Endothelial cell of umbilical vein (primary cell): ENCODE measurements at regions of chr3 and their contacts with region 1.

Region 1: GRCh38 chr3:14203521-14204079 is 25.0 kb downstream of the LSM3 start:
- DNase-seq: peak; percentile 72
- H3K4me3 ChIP-seq: no peak overlapping the region
- H3K27ac ChIP-seq: no peak overlapping the region
- H3K4me1 ChIP-seq: peaks cover 2% of the 10 kb centered on the region
- H3K27me3 ChIP-seq: no peaks in the 10 kb centered on the region
- CTCF ChIP-seq: peak; percentile 80 to 81
- POLR2A ChIP-seq: no peak

Region 2: DNA sequence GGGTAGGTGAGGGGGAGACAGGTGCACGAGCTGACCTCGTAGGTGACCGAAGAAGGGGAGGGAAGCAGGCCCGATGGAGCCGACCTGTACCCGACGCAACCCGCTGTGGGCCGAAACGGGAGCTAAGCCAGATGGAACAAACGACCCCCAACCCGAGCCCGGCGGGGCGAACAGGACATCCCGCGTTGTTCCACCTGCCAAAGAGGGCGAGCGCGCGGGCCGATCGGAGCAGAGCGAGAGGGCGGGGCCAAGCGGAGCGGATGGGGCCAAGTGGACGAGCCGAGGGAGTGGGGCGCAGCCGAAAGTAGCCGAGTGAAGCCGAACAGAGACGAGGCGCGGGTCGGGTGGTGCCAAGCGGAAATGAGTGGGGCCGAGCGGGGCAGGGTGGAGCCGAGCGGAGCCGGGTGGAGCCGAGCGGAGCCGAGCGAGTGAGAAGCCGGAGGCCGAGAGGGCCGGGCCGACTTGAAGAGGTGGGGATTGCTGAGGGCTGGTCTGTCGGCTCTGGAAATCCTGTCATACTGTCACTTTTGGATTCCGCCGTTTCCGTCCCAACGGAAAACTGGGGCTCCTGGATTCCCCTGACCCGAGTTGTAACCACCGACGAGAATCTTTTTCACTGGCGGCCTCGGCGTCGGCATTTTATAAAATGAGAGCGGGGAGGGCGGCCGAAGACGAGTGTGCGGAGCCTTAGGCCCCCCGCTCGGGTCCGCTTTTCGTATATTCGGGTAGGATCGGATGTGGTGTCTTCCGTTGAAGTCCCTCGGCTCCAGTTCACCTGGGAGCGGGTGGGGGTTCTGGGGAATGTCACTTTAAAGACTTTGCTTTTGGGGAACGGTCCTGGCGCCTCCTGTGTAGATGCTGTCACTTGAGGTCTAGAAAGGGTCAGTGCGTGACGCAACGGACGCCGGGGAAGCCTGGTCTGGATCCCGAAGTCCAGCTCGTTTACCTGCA is 308.2 kb before region 1 on chr3:
- CTCF ChIA-PET with region 1: interaction called, 46 read pairs
- POLR2A ChIA-PET with region 1: no interaction called
- dilution Hi-C with region 1: no loop called
- intact Hi-C with region 1: no loop called
- DNase-seq: peak; percentile 91
- H3K4me3 ChIP-seq: peak overlapping the region; percentile 22 to 54 (median 33)
- H3K27ac ChIP-seq: no peak overlapping the region
- H3K4me1 ChIP-seq: peaks cover 8% of the 10 kb centered on the region
- H3K27me3 ChIP-seq: no peaks in the 10 kb centered on the region
- CTCF ChIP-seq: no peak
- POLR2A ChIP-seq: no peak

Region 3: DNA sequence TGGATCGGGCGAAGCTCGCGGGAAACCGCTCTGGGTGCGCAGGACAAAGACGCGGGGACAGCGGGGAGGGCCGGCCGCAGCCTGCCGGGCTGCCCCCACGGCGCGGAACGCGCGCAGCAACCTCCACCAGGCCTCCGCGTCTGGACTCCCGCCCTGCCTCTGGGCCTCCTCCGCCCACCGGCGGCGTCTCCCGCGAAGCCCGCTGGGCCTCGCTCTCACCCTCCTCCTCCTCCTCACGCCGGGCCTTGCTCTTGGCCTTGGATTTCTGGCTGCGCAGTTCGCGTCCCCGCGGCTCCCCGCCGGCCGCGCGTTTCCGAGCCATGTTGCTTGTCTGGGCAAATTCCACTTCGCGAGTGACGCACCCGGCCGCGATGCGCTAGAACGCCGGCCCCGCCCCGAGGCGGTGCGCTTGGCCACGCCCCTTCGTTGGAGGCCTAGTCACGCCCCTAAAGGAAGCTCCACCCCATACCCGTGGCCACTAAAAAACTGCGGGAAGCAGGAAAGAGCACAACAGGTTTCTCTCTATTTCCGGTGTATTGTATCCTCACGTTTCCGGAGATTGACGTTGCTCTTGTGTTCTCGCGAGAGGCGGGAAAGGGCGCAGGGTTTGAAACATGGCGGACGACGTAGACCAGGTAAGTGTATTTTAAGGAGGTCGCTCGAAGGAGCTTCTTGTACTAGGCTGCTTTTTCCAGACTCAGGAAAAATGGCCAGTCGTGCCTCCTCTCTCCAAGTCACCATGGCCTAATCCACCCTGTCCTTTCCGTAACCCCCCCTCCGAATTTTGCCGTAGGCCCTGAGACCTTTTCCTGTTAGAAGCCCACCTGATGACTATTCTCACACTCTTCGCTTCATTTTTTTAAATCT is 25.1 kb before region 1 on chr3 and contains the starts of genes LSM3 and XPC:
- CTCF ChIA-PET with region 1: interaction called, 19 read pairs
- POLR2A ChIA-PET with region 1: interaction called, 9 read pairs
- dilution Hi-C with region 1: no loop called
- intact Hi-C with region 1: no loop called
- DNase-seq: peak; percentile 98
- H3K4me3 ChIP-seq: peak within 1 kb of the TSS; percentile 57 to 90 (median 81)
- H3K27ac ChIP-seq: peak within 1 kb of the TSS; percentile 70
- H3K4me1 ChIP-seq: peaks cover 10% of the 10 kb centered on the region
- H3K27me3 ChIP-seq: no peaks in the 10 kb centered on the region
- CTCF ChIP-seq: no peak
- POLR2A ChIP-seq: peak; percentile 95
- total RNA-seq, gene LSM3: 13.0 and 13.6 TPM in 2 replicates
- total RNA-seq, gene XPC: 36.7 and 36.8 TPM in 2 replicates

Region 4: DNA sequence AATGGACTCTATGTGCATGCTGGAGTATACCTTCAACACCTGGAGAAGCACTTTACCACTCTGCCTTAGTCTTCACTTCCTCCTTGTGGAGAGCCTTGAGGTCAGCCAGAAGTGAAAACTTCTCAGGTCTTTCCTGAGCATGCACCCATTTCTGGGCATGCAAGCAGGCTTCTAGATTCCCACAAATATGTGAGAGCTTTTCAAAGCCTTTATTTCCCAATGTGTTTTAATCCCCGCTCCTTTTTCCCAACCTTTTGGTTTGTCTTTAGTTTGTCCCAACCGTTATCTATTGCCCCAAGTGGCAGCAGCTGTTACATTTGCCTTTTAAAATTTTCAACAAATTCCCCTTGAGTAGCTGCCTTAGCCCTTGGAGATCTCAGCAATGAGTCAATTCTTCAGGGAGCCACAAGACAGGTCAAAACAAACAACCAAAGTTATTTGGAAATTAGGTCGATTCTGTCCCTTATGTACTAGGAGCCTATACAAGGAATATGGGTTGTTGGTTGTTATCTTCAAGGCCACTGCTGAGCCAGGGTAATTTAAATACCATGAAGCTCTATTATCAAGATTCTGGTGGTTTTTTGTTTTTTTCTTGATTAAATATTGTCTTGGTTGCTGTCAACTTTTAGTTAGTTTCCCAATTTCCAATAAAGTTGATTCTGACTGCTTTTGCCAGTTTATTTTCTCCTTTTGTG is 19.4 kb after region 1 on chr3:
- CTCF ChIA-PET with region 1: interaction called, 17 read pairs
- POLR2A ChIA-PET with region 1: interaction called, 3 read pairs
- dilution Hi-C with region 1: no loop called
- intact Hi-C with region 1: no loop called
- DNase-seq: no peak
- H3K4me3 ChIP-seq: no peak overlapping the region
- H3K27ac ChIP-seq: no peak overlapping the region
- H3K4me1 ChIP-seq: peaks cover 12% of the 10 kb centered on the region
- H3K27me3 ChIP-seq: peaks cover 0 to 2% of the 10 kb centered on the region in 2 experiments
- CTCF ChIP-seq: no peak
- POLR2A ChIP-seq: no peak

Region 5: GRCh38 chr3:14261229-14261628 is 57.6 kb after region 1 on chr3:
- CTCF ChIA-PET with region 1: interaction called, 22 read pairs
- POLR2A ChIA-PET with region 1: no interaction called
- dilution Hi-C with region 1: no loop called
- intact Hi-C with region 1: loop called (anchors 1 kb)
- DNase-seq: peak; percentile 81
- H3K4me3 ChIP-seq: no peak overlapping the region
- H3K27ac ChIP-seq: no peak overlapping the region
- H3K4me1 ChIP-seq: no peaks in the 10 kb centered on the region
- H3K27me3 ChIP-seq: peaks cover 6 to 9% of the 10 kb centered on the region in 2 experiments
- CTCF ChIP-seq: peak; percentile 90 to 91
- POLR2A ChIP-seq: no peak

Region 6: DNA sequence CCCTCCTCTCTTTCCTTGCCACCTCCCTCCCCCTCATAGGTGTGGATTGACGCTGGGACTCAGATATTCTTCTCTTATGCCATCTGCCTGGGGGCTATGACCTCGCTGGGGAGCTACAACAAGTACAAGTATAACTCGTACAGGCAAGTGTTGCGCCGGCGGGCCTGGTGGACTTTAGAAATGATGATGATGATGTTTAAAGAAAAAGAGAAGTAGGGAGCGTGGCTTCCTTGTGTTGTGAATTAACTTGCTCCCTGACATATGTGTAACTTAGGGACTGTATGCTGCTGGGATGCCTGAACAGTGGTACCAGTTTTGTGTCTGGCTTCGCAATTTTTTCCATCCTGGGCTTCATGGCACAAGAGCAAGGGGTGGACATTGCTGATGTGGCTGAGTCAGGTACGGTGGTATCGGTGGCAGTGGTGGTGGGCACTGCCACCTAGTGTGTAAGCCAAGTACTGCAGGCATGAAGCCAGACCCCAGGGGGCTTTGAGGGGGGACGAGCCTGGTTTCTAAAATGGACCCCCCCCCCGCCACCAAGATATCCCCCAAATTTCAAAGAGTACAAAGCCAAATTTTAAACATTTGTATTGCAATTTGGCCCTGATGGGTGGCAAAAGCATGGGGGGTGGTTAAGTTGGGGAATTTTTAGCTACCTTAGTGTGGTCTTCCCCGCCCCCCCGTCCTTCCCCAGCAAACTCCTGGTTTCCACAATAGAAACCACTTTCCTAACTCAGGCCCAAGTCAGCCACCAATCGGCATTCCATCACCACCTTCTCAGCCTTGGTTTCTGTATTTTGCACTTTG is 264.4 kb after region 1 on chr3:
- CTCF ChIA-PET with region 1: interaction called, 93 read pairs
- POLR2A ChIA-PET with region 1: no interaction called
- dilution Hi-C with region 1: no loop called
- intact Hi-C with region 1: loop called (anchors 1 kb)
- DNase-seq: peak; percentile 41
- H3K4me3 ChIP-seq: no peak overlapping the region
- H3K27ac ChIP-seq: no peak overlapping the region
- H3K4me1 ChIP-seq: peaks cover 7% of the 10 kb centered on the region
- H3K27me3 ChIP-seq: no peaks in the 10 kb centered on the region
- CTCF ChIP-seq: peak; percentile 64 to 85
- POLR2A ChIP-seq: no peak

Region 7: DNA sequence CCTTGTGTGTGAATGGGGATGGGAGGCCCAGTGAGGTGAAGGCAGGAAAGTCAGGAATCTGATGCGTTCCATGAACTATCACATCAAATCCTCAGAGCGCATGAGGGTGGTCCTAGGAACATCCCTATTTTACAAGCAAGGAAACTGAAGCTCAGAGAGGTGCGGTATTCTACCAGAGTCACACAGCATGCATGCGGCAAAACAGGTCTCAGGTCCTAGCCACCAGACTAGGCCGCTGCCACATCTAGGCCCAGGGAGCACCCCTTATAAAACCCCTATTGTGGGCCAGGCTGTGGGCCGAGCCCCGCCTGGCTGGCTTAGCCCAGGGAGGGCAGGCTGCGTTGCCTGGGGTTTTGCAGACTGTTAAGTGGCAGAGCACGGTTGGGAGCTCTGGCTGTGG is 354.4 kb after region 1 on chr3:
- CTCF ChIA-PET with region 1: interaction called, 13 read pairs
- POLR2A ChIA-PET with region 1: no interaction called
- dilution Hi-C with region 1: no loop called
- intact Hi-C with region 1: no loop called
- DNase-seq: no peak
- H3K4me3 ChIP-seq: no peak overlapping the region
- H3K27ac ChIP-seq: no peak overlapping the region
- H3K4me1 ChIP-seq: no peaks in the 10 kb centered on the region
- H3K27me3 ChIP-seq: peaks cover 4 to 13% of the 10 kb centered on the region in 2 experiments
- CTCF ChIP-seq: no peak
- POLR2A ChIP-seq: no peak